ENCODE measurements at regions of chr4 and their contacts with region 1.

Region 1: GRCh38 chr4:105146276-105147015 is at the start of gene TET2:
- DNase-seq: peak; percentile 92
- total RNA-seq, gene TET2: 19.5 TPM

Region 2: DNA sequence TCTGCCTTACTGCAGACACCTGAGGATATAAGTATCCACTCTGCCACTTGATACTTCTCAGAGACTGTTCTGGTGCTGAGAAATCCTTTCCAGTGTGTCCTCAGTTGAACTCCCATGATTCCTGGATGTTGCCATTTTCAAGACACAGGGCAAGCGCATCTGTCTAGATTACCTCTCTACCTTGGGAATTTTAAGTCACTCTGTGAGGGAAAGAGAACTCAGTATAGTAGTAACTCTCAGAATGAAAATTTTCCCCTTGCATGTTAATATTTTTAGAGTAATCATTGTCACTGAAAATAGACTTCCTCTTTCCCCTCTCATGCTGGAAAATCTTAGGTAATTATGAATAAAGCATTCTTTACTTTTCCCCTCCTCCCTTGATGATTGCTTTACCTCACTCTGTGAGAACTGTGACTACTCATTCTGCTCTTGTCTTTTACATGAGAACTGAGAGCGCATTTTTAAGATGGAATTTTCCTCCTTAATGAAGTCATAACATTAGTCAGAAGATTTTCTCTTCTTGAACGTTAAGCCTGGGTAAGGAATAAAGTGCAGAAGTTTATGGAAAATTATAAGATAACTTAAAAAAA is 45.3 kb after region 1 on chr4:
- intact Hi-C with region 1: loop called (anchors 2 kb)
- DNase-seq: no peak

Region 3: DNA sequence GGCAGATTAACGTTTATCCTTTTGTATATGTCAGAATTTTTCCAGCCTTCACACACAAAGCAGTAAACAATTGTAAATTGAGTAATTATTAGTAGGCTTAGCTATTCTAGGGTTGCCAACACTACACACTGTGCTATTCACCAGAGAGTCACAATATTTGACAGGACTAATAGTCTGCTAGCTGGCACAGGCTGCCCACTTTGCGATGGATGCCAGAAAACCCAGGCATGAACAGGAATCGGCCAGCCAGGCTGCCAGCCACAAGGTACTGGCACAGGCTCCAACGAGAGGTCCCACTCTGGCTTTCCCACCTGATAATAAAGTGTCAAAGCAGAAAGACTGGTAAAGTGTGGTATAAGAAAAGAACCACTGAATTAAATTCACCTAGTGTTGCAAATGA is 95.0 kb after region 1 on chr4:
- intact Hi-C with region 1: loop called (anchors 5 kb)
- DNase-seq: peak; percentile 79

Region 4: DNA sequence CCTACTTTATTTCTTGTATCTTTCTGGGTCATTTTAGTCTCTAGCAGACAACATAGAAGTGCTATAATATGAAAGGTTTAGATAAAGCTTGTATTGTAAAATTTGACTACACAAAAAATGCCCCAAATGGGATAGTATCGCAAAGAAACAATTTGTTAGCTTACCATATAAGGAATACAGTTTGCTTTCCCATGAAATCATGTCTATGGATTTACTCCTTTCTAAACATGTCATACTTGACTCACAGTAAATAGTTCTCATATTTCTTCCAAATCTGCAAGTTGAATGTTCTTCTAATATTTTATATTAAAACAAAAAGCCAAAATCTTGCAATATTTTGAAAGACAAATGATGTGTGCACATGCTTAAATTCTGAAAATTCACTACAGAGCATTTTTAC is 223.5 kb after region 1 on chr4:
- intact Hi-C with region 1: loop called (anchors 10 kb)
- DNase-seq: no peak

Region 5: DNA sequence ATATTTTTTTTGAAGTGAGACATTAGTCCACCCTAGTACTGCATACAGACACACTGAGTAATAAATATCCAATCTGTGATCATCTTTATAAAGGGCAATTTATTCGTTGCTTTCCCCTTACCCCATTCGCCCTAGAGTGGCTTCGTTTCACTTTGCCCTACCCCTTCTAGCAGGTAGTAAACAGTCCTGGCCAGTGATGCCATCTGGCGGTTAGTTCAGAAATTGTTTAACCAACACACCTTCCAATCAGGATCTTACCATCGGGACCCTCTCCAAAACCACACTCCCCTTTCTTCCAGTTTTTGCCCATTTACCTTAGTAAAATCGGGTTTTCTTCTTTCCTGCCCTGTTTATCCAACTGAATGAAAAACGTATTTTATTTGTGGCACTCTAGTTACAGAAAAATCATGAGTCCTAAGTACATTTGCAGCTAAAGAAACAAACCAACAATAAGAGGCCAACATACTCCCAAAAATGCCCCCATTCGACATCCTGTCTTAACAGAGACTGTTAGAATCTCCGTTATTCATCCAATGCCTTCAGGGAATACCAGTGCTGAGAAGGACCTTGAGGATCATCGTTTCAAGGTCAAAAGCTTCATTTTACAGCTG is 325.2 kb after region 1 on chr4:
- intact Hi-C with region 1: loop called (anchors 2 kb)
- DNase-seq: peak; percentile 78

Region 6: GRCh38 chr4:105708530-105709391 is 562.3 kb after region 1 on chr4 and contains the starts of genes GSTCD and INTS12:
- intact Hi-C with region 1: loop called (anchors 10 kb)
- DNase-seq: peak; percentile 95
- total RNA-seq, gene GSTCD: 4.8 TPM
- total RNA-seq, gene INTS12: 19.3 TPM